ENCODE measurements at regions of chr5 and their contacts with region 1.

Region 1: DNA sequence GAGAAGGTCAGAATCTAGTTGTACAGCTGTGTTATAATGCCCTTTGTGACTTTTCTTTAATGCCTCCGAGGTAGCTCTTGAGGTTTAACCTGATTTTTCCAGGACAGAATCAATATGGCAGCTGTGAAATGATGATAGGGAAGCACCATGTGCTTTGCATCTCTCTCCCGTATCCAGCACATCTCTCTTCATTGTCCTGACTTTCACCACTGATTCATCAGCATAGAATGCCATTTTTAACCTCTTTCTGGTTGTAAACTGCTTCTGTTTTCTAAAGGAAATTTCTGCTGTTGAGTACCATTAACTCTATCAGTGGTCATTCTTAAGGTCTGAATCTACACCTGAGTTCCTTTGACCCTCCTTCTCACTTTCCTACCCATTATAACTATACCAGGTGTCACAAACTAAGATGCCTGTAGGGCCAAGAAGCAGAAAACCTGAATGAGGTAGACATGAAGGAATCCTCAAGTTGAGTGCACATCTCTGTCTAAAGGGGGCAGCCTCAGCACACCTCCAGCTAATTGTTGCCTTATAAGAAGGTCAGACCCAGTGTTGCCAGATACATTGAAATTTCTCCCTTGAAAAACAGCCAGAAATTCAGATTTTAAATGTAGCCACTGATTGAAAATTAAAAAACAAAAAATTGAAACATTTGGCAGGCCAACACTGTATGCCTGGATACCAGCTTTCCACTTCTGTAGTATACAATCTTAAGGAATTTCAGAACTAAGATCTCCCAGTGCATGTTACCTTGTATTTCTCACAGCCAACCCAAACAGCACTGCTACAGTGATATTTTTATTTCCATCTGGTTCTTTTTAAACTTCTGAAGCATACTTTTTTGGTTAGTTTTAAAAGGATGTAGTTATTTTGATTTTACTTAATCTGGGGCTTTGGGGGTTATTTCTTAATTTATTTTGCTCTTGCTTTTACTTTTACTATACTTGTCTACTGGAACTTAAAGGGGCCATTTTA is 35.8 kb upstream of the TLX3 start:
- DNase-seq: peak; percentile 4
- H3K4me3 ChIP-seq: no peak overlapping the region
- H3K27ac ChIP-seq: no peak overlapping the region
- H3K4me1 ChIP-seq: no peaks in the 10 kb centered on the region
- CTCF ChIP-seq: peak; percentile 66

Region 2: GRCh38 chr5:170470275-170470674 is 803.0 kb before region 1 on chr5:
- CTCF ChIA-PET with region 1: no interaction called
- POLR2A ChIA-PET with region 1: interaction called, 11 read pairs
- intact Hi-C with region 1: no loop called
- DNase-seq: no peak
- H3K4me3 ChIP-seq: no peak overlapping the region
- H3K27ac ChIP-seq: no peak overlapping the region
- H3K4me1 ChIP-seq: no peaks in the 10 kb centered on the region
- CTCF ChIP-seq: no peak

Measured in OCI-LY7 (cell line).